Breast epithelium (tissue), 4 donors: ENCODE measurements at regions of chr2 and their contacts with region 1.

Region 1: DNA sequence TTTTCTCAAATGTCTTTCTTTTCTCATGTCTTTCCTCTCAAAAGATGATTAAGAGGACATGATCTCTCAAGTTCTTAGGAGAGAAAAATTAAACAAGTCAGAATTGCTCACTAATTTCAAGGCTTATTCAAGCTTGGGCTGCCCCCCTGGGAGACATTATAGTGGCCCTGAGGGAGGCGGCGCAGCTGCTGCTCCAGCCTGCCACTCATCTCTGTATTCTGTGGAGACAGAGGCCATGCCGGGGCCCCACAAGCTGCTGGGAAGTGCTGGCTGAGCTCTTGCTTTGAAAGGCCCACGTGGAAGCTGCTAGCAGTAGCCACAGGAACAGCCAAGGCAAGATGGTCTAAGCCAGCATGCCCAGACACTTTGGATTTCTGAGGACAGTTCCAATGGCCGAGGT is 267.4 kb downstream of the LNPK start:
- DNase-seq: no peak
- H3K4me3 ChIP-seq: no peak overlapping the region
- H3K27ac ChIP-seq: no peak overlapping the region
- H3K4me1 ChIP-seq: no peaks in the 10 kb centered on the region
- H3K27me3 ChIP-seq: no peaks in the 10 kb centered on the region
- CTCF ChIP-seq: no peak
- POLR2A ChIP-seq: no peak

Region 2: DNA sequence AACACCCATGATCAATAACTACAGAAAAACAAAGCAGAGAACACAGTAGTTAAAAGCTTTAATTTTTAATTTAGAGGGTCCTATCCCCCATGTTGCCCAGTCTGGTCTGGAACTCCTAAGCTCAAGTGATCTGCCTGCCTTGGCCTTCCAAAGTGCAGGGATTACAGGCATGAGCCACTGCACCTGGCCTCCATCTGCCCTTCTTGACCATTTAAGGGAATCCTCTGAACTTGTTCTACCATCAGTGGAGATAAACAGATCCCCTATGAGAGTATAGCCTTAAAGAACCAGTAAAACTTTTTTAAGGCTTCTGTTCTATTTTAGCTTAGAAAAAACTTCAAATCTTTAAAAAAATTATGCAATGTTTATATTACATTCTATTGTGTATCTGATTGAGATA is 539.7 kb before region 1 on chr2:
- intact Hi-C with region 1: no loop called
- DNase-seq: no peak
- H3K4me3 ChIP-seq: no peak overlapping the region
- H3K27ac ChIP-seq: no peak overlapping the region
- H3K4me1 ChIP-seq: no peaks in the 10 kb centered on the region
- H3K27me3 ChIP-seq: no peaks in the 10 kb centered on the region
- CTCF ChIP-seq: no peak
- POLR2A ChIP-seq: no peak

Region 3: GRCh38 chr2:175786471-175787124 is 51.9 kb after region 1 on chr2:
- intact Hi-C with region 1: no loop called
- DNase-seq: no peak
- H3K4me3 ChIP-seq: no peak overlapping the region
- H3K27ac ChIP-seq: no peak overlapping the region
- H3K4me1 ChIP-seq: no peaks in the 10 kb centered on the region
- H3K27me3 ChIP-seq: no peaks in the 10 kb centered on the region
- CTCF ChIP-seq: no peak
- POLR2A ChIP-seq: no peak

Region 4: DNA sequence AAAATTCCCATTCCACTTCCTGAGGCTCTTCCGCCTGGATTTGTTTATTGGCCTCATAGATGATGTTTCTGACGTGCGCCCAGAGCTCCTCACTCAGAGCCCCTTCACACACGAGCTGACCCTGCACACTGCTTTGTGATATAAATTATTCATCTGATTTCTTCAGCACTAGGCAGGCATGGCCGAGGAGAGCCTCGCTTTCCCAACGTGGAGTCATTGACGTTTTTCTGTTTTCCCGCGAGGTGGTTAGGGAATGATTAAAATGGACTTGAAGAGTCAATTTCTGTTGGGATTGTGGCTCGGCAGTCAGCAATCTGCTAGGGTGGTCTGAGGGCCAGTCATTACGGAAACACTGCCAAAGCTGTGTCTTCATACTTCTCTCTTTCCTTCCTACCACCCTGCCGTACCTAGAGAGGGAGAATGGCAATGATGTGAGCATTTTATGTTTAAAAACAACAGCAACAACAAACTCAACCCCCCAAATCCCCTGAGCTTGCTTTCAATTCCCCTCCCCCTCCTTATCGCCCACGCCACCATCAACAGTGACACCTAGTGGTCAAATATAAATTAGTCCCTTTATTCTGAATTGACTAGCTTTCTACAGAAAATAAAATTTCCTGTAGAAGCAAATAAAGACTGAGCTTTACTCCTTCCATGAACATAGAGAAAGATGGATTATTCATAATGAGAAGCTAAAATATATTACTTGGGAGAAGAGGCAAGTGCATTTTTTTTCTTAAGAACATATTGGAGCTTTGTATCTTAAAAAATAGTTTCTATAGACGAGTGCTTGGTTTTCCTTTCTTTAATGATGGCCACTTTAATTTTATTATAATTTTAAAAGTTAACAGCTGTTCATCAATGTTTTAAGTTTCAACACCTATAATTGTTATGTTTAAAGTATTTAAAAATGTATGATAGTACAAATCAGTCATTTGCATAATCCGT is 819.7 kb after region 1 on chr2:
- intact Hi-C with region 1: loop called (anchors 5 kb)
- DNase-seq: no peak
- H3K4me3 ChIP-seq: peak overlapping the region; percentile 37 to 67 (median 53)
- H3K27ac ChIP-seq: peak overlapping the region; percentile 61 to 79
- H3K4me1 ChIP-seq: no peaks in the 10 kb centered on the region
- H3K27me3 ChIP-seq: peaks cover 0 to 10% of the 10 kb centered on the region in 2 donors
- CTCF ChIP-seq: peak; percentile 76 to 89 (median 85)
- POLR2A ChIP-seq: no peak